ENCODE measurements at regions of chr22 and their contacts with region 1.

Region 1: DNA sequence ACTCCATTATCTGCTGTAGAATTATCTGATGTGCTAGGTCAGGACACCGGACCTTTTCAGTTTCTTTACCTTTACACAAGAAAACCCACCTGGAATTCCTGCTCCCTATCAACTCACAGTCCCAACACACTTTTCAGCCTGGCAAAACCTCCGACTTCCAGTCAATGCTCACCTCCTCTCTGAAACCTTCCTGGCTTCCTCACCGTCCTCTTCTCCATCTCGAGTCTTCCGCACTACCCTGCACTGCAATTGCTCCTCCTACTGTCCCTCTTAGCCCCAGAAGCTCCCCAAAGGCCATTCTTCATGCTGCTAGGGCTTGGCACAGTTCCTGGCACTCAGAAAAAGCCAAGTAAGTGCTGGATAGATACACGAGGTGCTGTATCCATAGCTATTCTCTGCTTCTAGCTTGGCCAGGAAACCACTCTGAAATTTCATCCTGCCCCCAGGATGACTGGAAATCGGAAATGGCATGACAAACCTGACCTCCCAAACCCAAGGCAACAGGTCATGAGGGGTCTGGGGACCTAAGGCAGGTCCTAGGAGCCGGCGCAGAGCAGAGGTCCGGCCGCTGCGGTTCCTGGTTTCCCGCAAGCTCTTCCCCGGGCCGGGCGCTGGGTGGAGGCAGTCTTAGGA is 702 bp downstream of the SYN3 start:
- DNase-seq: no peak
- H3K4me3 ChIP-seq: peak overlapping the region in 1 of 2 experiments; percentile 46; a peak in 2 of 4 replicates
- H3K27ac ChIP-seq: no peak overlapping the region
- H3K4me1 ChIP-seq: peaks cover 0 to 2% of the 10 kb centered on the region in 2 experiments; a peak in 1 of 4 replicates
- H3K27me3 ChIP-seq: no peaks in the 10 kb centered on the region; the same call in 1 of the 2 replicates
- CTCF ChIP-seq: no peak
- EP300 ChIP-seq: no peak
- RAD21 ChIP-seq: no peak

Region 2: GRCh38 chr22:32979606-32980005 is 77.9 kb before region 1 on chr22:
- CTCF ChIA-PET with region 1: no interaction called
- POLR2A ChIA-PET with region 1: no interaction called
- DNase-seq: no peak
- H3K4me3 ChIP-seq: no peak overlapping the region
- H3K27ac ChIP-seq: no peak overlapping the region
- H3K4me1 ChIP-seq: no peaks in the 10 kb centered on the region
- H3K27me3 ChIP-seq: no peaks in the 10 kb centered on the region
- CTCF ChIP-seq: no peak
- EP300 ChIP-seq: no peak
- RAD21 ChIP-seq: no peak

Region 3: DNA sequence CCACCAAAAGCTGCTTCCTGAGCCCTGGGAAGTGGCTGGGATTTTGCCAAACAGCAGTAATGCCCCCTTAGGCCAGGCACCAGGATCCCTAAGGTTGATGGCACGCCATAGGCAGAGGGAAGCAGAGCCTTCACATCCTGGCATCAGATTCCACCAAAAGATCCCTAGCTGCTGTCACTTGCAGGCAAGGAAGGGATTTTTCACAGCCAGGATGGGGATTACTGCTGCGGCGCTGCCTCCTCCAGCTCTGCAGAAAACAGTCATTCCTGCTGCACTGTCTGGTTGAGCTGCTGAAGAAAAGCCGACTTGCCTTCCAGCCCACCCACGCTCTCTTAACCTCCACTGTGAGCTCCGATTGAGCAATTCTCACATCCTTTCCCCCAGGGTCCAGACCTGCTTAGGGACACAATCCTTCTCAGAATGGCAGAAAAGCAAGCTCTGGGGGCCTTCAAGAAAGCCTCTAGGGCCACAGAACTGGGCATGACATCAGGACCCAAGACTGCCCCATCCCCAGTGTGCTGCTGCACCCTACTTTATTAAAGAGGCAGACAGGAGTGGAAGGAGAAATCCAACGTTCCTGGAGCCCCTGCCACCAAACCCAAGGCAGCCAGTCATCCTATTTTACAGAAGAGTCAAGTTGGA is 19.2 kb before region 1 on chr22:
- CTCF ChIA-PET with region 1: interaction called, 92 read pairs
- POLR2A ChIA-PET with region 1: no interaction called
- DNase-seq: peak; percentile 56
- H3K4me3 ChIP-seq: no peak overlapping the region
- H3K27ac ChIP-seq: no peak overlapping the region
- H3K4me1 ChIP-seq: peaks cover 0 to 3% of the 10 kb centered on the region in 2 experiments; a peak in 1 of 4 replicates
- H3K27me3 ChIP-seq: no peaks in the 10 kb centered on the region; the same call in 1 of the 2 replicates
- CTCF ChIP-seq: no peak
- EP300 ChIP-seq: no peak
- RAD21 ChIP-seq: no peak

Region 4: DNA sequence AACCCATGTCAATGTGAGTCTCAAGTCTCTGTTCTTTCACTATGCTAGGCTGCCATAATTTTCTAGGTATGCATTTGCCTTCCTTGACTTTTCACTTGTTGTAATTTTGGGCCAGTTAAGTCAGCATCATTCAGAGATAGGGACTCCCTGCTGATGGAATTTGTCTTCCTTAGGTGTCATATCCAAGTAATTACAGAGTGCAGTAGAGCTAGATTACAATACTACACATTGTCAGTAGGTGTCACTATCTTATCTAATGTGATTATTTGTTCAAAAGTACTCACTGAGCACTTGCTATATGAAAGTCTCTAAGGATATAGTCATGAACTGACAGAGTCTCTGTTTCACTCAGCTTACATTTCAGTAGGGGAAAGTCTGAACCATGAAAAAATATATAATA is 25.7 kb after region 1 on chr22:
- CTCF ChIA-PET with region 1: interaction called, 14 read pairs
- POLR2A ChIA-PET with region 1: no interaction called
- DNase-seq: no peak
- H3K4me3 ChIP-seq: no peak overlapping the region
- H3K27ac ChIP-seq: no peak overlapping the region
- H3K4me1 ChIP-seq: peaks cover 0 to 2% of the 10 kb centered on the region in 2 experiments; a peak in 1 of 4 replicates
- H3K27me3 ChIP-seq: no peaks in the 10 kb centered on the region
- CTCF ChIP-seq: no peak
- EP300 ChIP-seq: no peak
- RAD21 ChIP-seq: no peak

Region 5: GRCh38 chr22:33126881-33127280 is 69.4 kb after region 1 on chr22:
- CTCF ChIA-PET with region 1: interaction called, 16 read pairs
- POLR2A ChIA-PET with region 1: no interaction called
- DNase-seq: peak; percentile 52
- H3K4me3 ChIP-seq: no peak overlapping the region
- H3K27ac ChIP-seq: no peak overlapping the region
- H3K4me1 ChIP-seq: no peaks in the 10 kb centered on the region
- H3K27me3 ChIP-seq: no peaks in the 10 kb centered on the region
- CTCF ChIP-seq: no peak
- EP300 ChIP-seq: no peak
- RAD21 ChIP-seq: peak; percentile 85

Measured in SK-N-SH (cell line).